ENCODE measurements at regions of chr22 and their contacts with region 1.

Region 1: GRCh38 chr22:38467904-38468758 is at the start of gene KDELR3:
- DNase-seq: peak in 1 of 2 donors; percentile 87
- H3K4me3 ChIP-seq: peak within 1 kb of the TSS; percentile 63 to 82
- H3K27ac ChIP-seq: peak within 1 kb of the TSS in 1 of 2 donors; percentile 48
- H3K4me1 ChIP-seq: peaks cover 0 to 12% of the 10 kb centered on the region in 2 donors
- H3K27me3 ChIP-seq: no peaks in the 10 kb centered on the region
- CTCF ChIP-seq: no peak
- total RNA-seq, gene KDELR3: 11.8 TPM

Region 2: DNA sequence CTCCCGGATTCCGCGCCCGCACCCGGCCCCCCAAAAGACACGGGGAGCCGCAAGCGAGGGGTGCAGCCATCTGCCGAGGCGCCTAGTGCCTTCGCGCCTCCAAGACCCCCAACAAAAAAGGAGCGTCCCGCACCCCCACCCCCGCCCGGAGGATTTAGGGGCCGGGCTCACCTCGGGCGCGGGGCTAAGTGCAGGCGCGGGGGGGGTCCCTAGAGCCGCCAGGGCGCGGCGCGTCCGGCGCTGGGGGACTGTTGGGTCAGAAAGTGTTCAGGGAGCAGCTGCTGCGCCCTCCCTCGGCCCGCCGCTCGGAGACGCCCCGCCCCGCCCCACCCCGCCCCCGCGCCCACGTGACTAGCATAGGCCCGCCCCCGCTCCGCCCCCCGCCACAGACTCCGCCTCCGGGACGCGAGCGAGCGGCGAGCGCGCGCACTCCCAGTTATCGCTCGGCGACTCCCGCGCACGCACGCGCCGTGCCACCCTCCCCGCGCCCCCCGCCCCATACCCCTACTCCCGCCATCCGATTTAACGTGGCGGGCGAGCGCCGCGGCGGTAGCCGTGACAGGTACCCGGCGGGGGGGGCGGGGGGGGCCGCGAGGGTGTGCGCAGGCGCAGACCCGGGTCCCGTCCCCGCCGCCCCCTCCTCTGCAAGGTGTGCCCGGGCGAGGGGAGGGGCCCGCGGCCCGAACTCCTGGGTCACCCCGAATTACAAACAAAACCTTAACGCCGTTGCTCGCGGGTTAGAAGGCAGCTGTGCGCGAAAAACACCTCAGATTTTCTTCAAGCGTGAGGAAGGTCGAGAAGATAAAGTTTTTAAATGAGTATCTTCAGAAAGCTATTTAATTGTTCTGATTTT is 69.3 kb before region 1 on chr22:
- intact Hi-C with region 1: loop called (anchors 5 kb)
- DNase-seq: peak in 1 of 2 donors; percentile 85
- H3K4me3 ChIP-seq: peak overlapping the region; percentile 82 to 97
- H3K27ac ChIP-seq: peak overlapping the region; percentile 77 to 86
- H3K4me1 ChIP-seq: peaks cover 0 to 3% of the 10 kb centered on the region in 2 donors
- H3K27me3 ChIP-seq: no peaks in the 10 kb centered on the region
- CTCF ChIP-seq: no peak

Region 3: GRCh38 chr22:38497869-38498268 is 29.7 kb after region 1 on chr22:
- intact Hi-C with region 1: no loop called
- DNase-seq: no peak
- H3K4me3 ChIP-seq: no peak overlapping the region
- H3K27ac ChIP-seq: no peak overlapping the region
- H3K4me1 ChIP-seq: peaks cover 0 to 21% of the 10 kb centered on the region in 2 donors
- H3K27me3 ChIP-seq: no peaks in the 10 kb centered on the region
- CTCF ChIP-seq: no peak

Region 4: DNA sequence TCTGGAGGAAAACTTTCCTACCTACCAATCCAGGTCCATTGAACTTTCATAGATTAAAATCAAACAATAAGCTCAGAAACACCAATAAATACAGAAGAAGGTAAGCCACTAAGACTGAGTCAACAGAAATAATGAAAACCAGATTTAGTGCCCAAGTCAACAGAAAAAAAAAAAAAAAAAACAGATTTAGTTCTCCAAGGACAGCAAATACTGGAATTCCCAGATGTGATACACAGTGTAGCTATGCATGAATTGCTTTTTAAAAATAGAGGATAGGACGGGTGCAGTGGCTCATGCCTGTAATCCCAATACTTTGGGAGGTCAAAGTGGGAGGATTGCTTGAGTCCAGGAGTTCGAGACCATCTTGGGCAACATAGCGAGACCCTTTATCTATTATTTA is 86.2 kb after region 1 on chr22:
- intact Hi-C with region 1: no loop called
- DNase-seq: no peak
- H3K4me3 ChIP-seq: no peak overlapping the region
- H3K27ac ChIP-seq: peak overlapping the region in 1 of 2 donors; percentile 17
- H3K4me1 ChIP-seq: no peaks in the 10 kb centered on the region
- H3K27me3 ChIP-seq: no peaks in the 10 kb centered on the region
- CTCF ChIP-seq: no peak

Measured in ascending aorta (tissue), 2 donors.